ENCODE measurements at regions of chr12 and their contacts with region 1.

Region 1: GRCh38 chr12:89019408-89020120 is 332.7 kb downstream of the DUSP6 start:
- DNase-seq: peak; percentile 41 to 81
- H3K4me3 ChIP-seq: peak overlapping the region in 1 of 4 experiments; percentile 19; a peak in 1 of 8 replicates
- H3K27ac ChIP-seq: no peak overlapping the region
- H3K4me1 ChIP-seq: no peaks in the 10 kb centered on the region
- H3K27me3 ChIP-seq: no peaks in the 10 kb centered on the region
- CTCF ChIP-seq: peak; percentile 72 to 97 (median 96)
- EP300 ChIP-seq: no peak
- POLR2A ChIP-seq: no peak
- RAD21 ChIP-seq: peak; percentile 98 to 99

Region 2: DNA sequence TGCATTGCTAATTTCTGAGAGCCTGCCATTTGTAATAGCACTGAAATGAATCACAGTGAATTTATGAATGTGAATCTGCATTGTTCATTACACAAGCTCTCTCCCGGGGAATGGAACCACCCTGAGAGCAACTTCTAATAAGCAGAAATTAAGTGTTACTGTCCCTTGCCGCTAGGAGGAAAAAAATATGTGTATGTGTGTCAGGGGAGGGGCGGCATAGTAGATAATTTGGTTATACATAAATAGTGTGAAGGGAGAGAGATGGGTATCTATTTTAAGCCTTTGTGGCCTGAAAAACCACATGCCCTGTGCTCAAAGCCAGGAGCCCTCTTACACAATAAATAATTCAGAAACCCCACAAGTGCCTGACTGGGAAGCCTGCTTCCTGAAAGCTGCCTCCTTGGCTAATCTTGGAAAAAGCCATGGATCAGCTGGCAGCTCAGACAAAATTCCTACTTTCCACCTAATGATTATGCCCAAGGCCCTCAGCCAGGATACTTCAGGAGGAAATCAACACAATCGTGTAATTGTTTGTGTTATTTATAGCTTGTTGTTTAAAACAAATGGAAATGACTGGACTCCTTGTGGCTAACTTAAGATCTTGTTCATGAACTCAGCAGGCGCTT is 73.1 kb before region 1 on chr12:
- CTCF ChIA-PET with region 1: no interaction called
- POLR2A ChIA-PET with region 1: no interaction called
- DNase-seq: no peak
- H3K4me3 ChIP-seq: no peak overlapping the region
- H3K27ac ChIP-seq: no peak overlapping the region
- H3K4me1 ChIP-seq: peaks cover 0 to 8% (median 6%) of the 10 kb centered on the region in 4 experiments; a peak in 2 of 7 replicates
- H3K27me3 ChIP-seq: peaks cover 0 to 15% (median 9%) of the 10 kb centered on the region in 4 experiments; a peak in 5 of 7 replicates
- CTCF ChIP-seq: no peak
- EP300 ChIP-seq: no peak
- POLR2A ChIP-seq: no peak
- RAD21 ChIP-seq: no peak

Region 3: GRCh38 chr12:89029961-89030360 is 10.4 kb after region 1 on chr12:
- CTCF ChIA-PET with region 1: interaction called, 25 read pairs
- POLR2A ChIA-PET with region 1: no interaction called
- DNase-seq: no peak
- H3K4me3 ChIP-seq: no peak overlapping the region
- H3K27ac ChIP-seq: no peak overlapping the region
- H3K4me1 ChIP-seq: no peaks in the 10 kb centered on the region
- H3K27me3 ChIP-seq: no peaks in the 10 kb centered on the region
- CTCF ChIP-seq: no peak
- EP300 ChIP-seq: no peak
- POLR2A ChIP-seq: no peak
- RAD21 ChIP-seq: no peak

Region 4: GRCh38 chr12:89040146-89040964 is 20.8 kb after region 1 on chr12:
- CTCF ChIA-PET with region 1: interaction called, 11 read pairs
- POLR2A ChIA-PET with region 1: interaction called, 3 read pairs
- DNase-seq: no peak
- H3K4me3 ChIP-seq: no peak overlapping the region
- H3K27ac ChIP-seq: no peak overlapping the region
- H3K4me1 ChIP-seq: peaks cover 0 to 5% (median 0%) of the 10 kb centered on the region in 4 experiments; a peak in 1 of 7 replicates
- H3K27me3 ChIP-seq: no peaks in the 10 kb centered on the region
- CTCF ChIP-seq: no peak
- EP300 ChIP-seq: no peak
- POLR2A ChIP-seq: no peak
- RAD21 ChIP-seq: no peak; a peak in 1 of 4 replicates

Region 5: DNA sequence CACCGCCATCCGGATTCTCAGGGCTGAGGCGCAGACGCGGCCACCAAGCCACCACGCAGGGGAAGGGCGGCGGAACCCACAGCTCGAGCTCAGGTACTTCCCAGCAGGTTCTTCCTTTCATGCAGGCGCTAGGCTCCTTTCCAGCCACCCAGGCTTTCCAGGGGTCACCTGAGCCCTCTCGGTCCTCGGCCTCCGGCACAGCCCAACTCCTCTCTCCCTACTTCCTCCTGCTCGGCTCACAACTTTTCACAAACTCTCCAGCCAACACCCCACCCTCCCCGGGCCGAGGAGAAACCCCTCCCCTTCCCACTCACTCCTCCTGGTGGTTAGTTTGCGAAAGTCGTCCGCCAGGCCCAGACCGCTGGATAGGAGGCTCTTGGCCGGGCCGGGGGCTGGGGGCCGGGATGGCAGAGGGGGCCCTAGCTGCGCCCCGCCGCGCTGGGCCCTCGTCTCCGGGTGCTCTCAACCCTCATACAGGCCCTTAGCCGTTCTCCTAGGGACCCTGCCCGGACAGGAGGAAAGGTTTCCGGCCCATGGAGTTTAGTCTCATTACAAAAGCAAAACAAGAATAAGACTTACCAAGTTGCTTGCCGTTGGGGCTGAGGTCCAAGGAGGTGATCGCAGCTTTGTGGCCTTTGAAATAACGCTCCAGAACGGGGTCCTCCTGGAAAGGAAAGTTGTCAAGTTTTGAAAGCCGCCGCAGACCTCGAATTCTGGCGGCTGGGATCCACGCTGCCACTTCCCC is 505.1 kb after region 1 on chr12 and contains the start of gene GALNT4:
- CTCF ChIA-PET with region 1: interaction called, 37 read pairs
- POLR2A ChIA-PET with region 1: no interaction called
- DNase-seq: peak; percentile 47 to 88
- H3K4me3 ChIP-seq: peak within 1 kb of the TSS; percentile 76 to 92 (median 84)
- H3K27ac ChIP-seq: no peak within 1 kb of the TSS
- H3K4me1 ChIP-seq: peaks cover 0 to 3% (median 1%) of the 10 kb centered on the region in 4 experiments; a peak in 2 of 7 replicates
- H3K27me3 ChIP-seq: no peaks in the 10 kb centered on the region
- CTCF ChIP-seq: peak; percentile 59 to 78 (median 71)
- EP300 ChIP-seq: no peak
- POLR2A ChIP-seq: peak in 1 of 2 experiments; percentile 66; a peak in 1 of 3 replicates
- RAD21 ChIP-seq: peak; percentile 45 to 61
- total RNA-seq, gene GALNT4: 3.3 and 3.6 TPM in 2 replicates

Measured in H1 (cell line).